Heart right ventricle (tissue), 16 donors: ENCODE measurements at regions of chr2 and their contacts with region 1.

Region 1: GRCh38 chr2:196453613-196454047 is 185.9 kb upstream of the CCDC150 start:
- DNase-seq: peak in 1 of 2 donors; percentile 67
- ATAC-seq: peak in 7 of 8 donors; percentile 47 to 80 (median 71)
- H3K4me3 ChIP-seq: no peak overlapping the region
- H3K27ac ChIP-seq: peak overlapping the region in 1 of 10 donors; percentile 18
- H3K4me1 ChIP-seq: peaks cover 0 to 17% (median 8%) of the 10 kb centered on the region in 9 donors
- H3K27me3 ChIP-seq: peaks cover 0 to 4% (median 0%) of the 10 kb centered on the region in 7 donors
- CTCF ChIP-seq: peak; percentile 33 to 82 (median 71)

Region 2: GRCh38 chr2:196088203-196088602 is 365.4 kb before region 1 on chr2:
- intact Hi-C with region 1: loop called in 2 of 10 experiments (anchors 10 kb)
- DNase-seq: no peak
- ATAC-seq: no peak
- H3K4me3 ChIP-seq: no peak overlapping the region
- H3K27ac ChIP-seq: no peak overlapping the region
- H3K4me1 ChIP-seq: no peaks in the 10 kb centered on the region
- H3K27me3 ChIP-seq: peaks cover 0 to 2% (median 0%) of the 10 kb centered on the region in 7 donors
- CTCF ChIP-seq: no peak

Region 3: GRCh38 chr2:196171248-196171871 is 282.3 kb before region 1 on chr2 and contains the start of gene STK17B:
- intact Hi-C with region 1: no loop called
- DNase-seq: peak; percentile 95 to 96
- ATAC-seq: peak; percentile 96 to 99 (median 97)
- H3K4me3 ChIP-seq: peak within 1 kb of the TSS; percentile 75 to 97 (median 85)
- H3K27ac ChIP-seq: peak within 1 kb of the TSS; percentile 67 to 94 (median 80)
- H3K4me1 ChIP-seq: peaks cover 0 to 43% (median 20%) of the 10 kb centered on the region in 9 donors
- H3K27me3 ChIP-seq: no peaks in the 10 kb centered on the region
- CTCF ChIP-seq: peak in 4 of 9 donors; percentile 8 to 31 (median 12)
- total RNA-seq, gene STK17B: 2.6 to 20.4 (median 4.4) TPM

Region 4: DNA sequence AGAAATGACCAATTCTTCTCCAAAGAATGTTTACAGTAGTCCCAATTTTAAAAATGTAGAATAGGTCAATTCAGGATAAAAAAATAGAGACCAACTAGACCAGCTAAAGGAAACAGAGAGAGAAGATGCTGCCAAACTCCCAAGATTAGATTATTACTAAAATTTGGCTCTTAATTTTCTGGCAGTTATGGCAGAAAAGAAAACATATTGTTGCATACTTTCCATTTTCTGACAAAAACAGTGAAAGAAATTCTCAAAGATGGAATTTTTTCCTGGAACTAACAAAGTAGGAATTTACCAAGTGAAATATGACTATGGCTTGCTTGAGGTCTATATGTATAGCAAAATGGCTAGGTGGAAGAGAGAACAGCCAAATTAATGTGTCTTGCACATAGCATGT is 143.9 kb before region 1 on chr2:
- intact Hi-C with region 1: loop called in 5 of 10 experiments (anchors 5 to 10 kb)
- DNase-seq: no peak
- ATAC-seq: peak in 1 of 8 donors; percentile 25
- H3K4me3 ChIP-seq: no peak overlapping the region
- H3K27ac ChIP-seq: peak overlapping the region in 2 of 10 donors; percentile 18 to 37
- H3K4me1 ChIP-seq: peaks cover 0 to 31% (median 0%) of the 10 kb centered on the region in 9 donors
- H3K27me3 ChIP-seq: no peaks in the 10 kb centered on the region
- CTCF ChIP-seq: no peak

Region 5: DNA sequence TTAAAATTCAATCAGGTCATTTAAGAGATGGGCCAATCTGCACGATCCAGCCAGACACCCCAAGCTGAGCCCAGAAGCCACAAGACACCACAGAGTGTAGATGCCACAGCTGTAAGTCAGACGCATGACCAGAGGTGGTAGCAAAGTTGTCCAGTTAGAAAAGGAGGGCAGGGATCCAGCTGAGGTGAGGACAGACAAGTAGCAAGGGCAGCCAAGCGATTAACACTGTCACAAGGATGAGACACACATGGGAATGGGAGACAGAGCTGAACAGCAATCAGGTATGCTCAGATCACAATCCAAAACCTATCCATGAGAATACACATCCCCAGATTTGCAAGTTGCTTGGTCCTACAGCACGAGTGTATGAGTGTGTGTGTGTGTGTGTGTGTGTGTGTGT is 138.8 kb before region 1 on chr2:
- intact Hi-C with region 1: loop called in 4 of 10 experiments (anchors 5 to 10 kb)
- DNase-seq: peak in 1 of 2 donors; percentile 65
- ATAC-seq: peak; percentile 39 to 88 (median 76)
- H3K4me3 ChIP-seq: no peak overlapping the region
- H3K27ac ChIP-seq: peak overlapping the region in 1 of 10 donors; percentile 58
- H3K4me1 ChIP-seq: peaks cover 0 to 41% (median 3%) of the 10 kb centered on the region in 9 donors
- H3K27me3 ChIP-seq: no peaks in the 10 kb centered on the region
- CTCF ChIP-seq: peak in 3 of 9 donors; percentile 15 to 27 (median 20)

Region 6: DNA sequence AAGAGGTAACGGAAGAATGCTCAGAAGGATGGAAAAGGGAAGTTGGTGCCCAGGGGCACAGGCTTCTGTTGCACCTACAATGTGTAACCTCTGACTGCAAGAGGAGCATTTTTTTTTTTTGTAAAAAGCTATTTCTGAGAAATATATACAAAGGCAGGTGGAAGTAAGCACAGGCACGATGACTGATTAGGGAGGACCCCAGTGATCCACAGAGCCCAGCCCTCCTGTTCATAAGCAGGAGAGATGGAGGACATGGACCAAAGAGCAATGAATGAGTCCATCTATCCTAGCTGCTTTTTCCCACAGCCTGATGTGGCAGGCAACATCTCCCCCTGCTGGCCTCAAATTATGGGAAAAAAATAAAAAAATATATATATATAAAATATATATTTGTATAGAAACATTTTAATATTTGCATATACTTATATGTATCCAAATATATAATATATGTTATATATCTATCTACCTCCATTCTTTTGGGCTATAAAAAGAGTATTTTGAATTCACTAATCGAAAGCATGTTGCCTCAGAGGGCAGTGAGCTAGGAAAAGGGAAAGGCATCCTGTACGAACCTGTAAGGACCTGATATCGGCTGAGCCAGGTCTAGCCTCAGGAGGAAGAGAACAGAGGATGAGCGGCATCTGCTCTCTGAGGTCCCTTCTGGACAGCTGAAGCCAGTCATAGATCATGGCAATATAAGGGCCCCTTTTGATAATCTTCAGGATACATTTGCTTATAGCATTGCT is 116.2 kb before region 1 on chr2:
- intact Hi-C with region 1: loop called in 2 of 10 experiments (anchors 5 to 10 kb)
- DNase-seq: no peak
- ATAC-seq: no peak
- H3K4me3 ChIP-seq: no peak overlapping the region
- H3K27ac ChIP-seq: peak overlapping the region in 1 of 10 donors; percentile 8
- H3K4me1 ChIP-seq: peaks cover 0 to 84% (median 22%) of the 10 kb centered on the region in 9 donors
- H3K27me3 ChIP-seq: no peaks in the 10 kb centered on the region
- CTCF ChIP-seq: peak; percentile 10 to 64 (median 56)

Region 7: DNA sequence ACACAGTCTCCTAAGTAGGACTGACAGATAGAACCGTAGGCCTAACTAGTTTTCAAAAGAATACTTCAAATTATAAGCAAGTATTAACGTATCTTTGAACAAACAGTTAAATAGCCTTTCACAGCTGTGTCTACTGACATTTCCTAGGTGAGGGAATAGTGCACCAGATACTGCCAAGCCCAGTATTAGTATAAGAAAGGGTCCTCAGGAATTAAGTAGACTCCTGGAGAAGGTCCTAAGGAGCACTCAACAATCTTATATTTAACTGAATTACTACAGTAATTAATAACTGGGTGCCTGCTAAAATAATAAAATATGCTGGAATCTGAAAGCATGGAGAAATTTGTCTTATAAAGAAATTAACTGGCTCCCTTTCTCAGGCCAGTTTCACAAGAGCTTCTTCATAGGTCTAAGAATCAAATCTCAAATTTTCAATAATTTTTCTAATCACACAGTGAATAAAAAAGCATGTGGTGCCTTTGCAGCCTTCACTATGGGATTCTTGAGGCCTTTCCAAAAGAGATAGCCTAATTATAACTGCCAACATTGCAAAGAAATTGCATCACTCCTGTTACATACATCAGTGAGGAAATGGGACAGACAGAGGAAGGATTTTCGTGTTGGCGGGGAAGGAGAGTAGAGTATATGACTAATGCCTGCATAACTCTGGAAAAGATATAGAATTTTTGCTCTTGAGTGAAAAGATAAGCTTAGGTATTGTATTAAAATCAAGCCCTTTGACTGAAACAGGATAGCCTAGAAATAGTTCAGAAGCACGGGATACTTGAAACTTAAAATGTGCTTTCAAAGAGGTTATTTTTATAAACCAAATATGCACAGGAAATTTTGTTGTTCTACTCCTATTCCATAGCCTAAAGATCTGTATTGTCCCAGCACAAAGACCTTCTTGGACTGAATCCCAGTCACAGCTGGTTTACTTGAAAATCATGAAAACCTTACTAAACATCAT is 53.6 kb before region 1 on chr2:
- intact Hi-C with region 1: loop called in 1 of 10 experiments (anchors 5 kb)
- DNase-seq: peak in 1 of 2 donors; percentile 41
- ATAC-seq: peak; percentile 76 to 92 (median 86)
- H3K4me3 ChIP-seq: peak overlapping the region in 1 of 10 donors; percentile 12
- H3K27ac ChIP-seq: peak overlapping the region in 9 of 10 donors; percentile 41 to 80 (median 67)
- H3K4me1 ChIP-seq: peaks cover 7 to 61% (median 46%) of the 10 kb centered on the region in 9 donors
- H3K27me3 ChIP-seq: no peaks in the 10 kb centered on the region
- CTCF ChIP-seq: no peak

Region 8: GRCh38 chr2:196758474-196759377 is 305.1 kb after region 1 on chr2:
- intact Hi-C with region 1: no loop called
- DNase-seq: no peak
- ATAC-seq: peak in 5 of 8 donors; percentile 47 to 86 (median 81)
- H3K4me3 ChIP-seq: no peak overlapping the region
- H3K27ac ChIP-seq: no peak overlapping the region
- H3K4me1 ChIP-seq: peaks cover 0 to 8% (median 0%) of the 10 kb centered on the region in 9 donors
- H3K27me3 ChIP-seq: no peaks in the 10 kb centered on the region
- CTCF ChIP-seq: peak in 8 of 9 donors; percentile 9 to 61 (median 48)